SK-N-SH (cell line): ENCODE measurements at regions of chr20 and their contacts with region 1.

Region 1: GRCh38 chr20:45771182-45771759 is 20.4 kb downstream of the WFDC3 start:
- DNase-seq: peak; percentile 70
- H3K4me3 ChIP-seq: peak overlapping the region in 1 of 2 experiments; percentile 38; a peak in 1 of 4 replicates
- H3K27ac ChIP-seq: no peak overlapping the region
- H3K4me1 ChIP-seq: peaks cover 0 to 3% of the 10 kb centered on the region in 2 experiments; a peak in 2 of 4 replicates
- H3K27me3 ChIP-seq: no peaks in the 10 kb centered on the region
- CTCF ChIP-seq: peak; percentile 97
- EP300 ChIP-seq: no peak
- RAD21 ChIP-seq: peak; percentile 95

Region 2: GRCh38 chr20:45044084-45044573 is 727.1 kb before region 1 on chr20:
- CTCF ChIA-PET with region 1: interaction called, 11 read pairs
- POLR2A ChIA-PET with region 1: no interaction called
- DNase-seq: peak; percentile 36
- H3K4me3 ChIP-seq: no peak overlapping the region; a peak in 1 of 4 replicates
- H3K27ac ChIP-seq: peak overlapping the region in 1 of 2 experiments; percentile 63; a peak in 2 of 4 replicates
- H3K4me1 ChIP-seq: peaks cover 0 to 29% of the 10 kb centered on the region in 2 experiments; a peak in 2 of 4 replicates
- H3K27me3 ChIP-seq: no peaks in the 10 kb centered on the region
- CTCF ChIP-seq: peak; percentile 96
- EP300 ChIP-seq: no peak
- RAD21 ChIP-seq: peak; percentile 91

Region 3: DNA sequence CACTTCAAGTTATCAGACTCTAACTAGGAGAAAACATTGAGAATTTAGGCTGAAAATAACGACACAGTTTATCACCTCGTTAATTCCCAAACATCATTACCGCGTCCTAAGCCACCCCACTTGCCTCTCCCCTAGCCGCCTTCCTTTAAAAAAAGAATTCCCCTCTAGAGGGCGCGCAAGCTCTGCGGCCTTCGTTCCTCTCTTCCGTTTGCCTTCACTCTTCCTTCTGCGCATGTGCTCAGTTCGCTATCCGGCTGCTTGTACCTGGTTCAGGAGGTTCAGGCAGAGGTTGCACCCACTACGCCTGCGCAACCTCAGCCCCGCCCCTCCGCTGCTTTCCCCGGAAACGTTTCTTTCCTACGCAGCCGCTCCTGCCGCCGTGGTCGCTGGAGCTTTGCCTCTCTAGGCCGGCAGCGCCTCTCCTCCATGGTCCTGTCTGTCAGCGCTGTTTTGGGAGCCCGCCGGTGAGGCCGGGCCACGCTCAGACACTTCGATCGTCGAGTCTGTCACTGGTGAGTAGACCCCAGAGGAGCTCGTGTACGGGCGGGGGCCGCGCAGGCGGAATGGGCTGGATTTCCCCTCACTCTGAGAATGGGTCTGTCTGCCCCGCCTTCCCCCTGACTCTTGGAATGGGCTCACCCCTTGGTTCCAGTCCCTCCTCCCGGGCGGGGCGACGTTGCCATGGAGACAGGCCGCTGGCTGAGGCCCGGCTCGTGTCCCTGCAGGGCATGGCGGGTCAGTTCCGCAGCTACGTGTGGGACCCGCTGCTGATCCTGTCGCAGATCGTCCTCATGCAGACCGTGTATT is 408.3 kb before region 1 on chr20 and contains the start of gene SYS1:
- CTCF ChIA-PET with region 1: interaction called, 26 read pairs
- POLR2A ChIA-PET with region 1: no interaction called
- DNase-seq: peak; percentile 96
- H3K4me3 ChIP-seq: peak within 1 kb of the TSS; percentile 80 to 92
- H3K27ac ChIP-seq: peak within 1 kb of the TSS; percentile 91 to 97
- H3K4me1 ChIP-seq: peaks cover 0 to 11% of the 10 kb centered on the region in 2 experiments; a peak in 2 of 4 replicates
- H3K27me3 ChIP-seq: no peaks in the 10 kb centered on the region
- CTCF ChIP-seq: peak; percentile 88
- EP300 ChIP-seq: peak; percentile 13 to 15; a peak in 1 of 4 replicates
- RAD21 ChIP-seq: peak; percentile 87
- polyA plus RNA-seq, gene SYS1: 26.5 and 26.9 TPM in 2 replicates

Region 4: GRCh38 chr20:45450097-45450818 is 321.0 kb before region 1 on chr20:
- CTCF ChIA-PET with region 1: interaction called, 67 read pairs
- POLR2A ChIA-PET with region 1: no interaction called
- DNase-seq: peak; percentile 41
- H3K4me3 ChIP-seq: no peak overlapping the region
- H3K27ac ChIP-seq: no peak overlapping the region
- H3K4me1 ChIP-seq: no peaks in the 10 kb centered on the region
- H3K27me3 ChIP-seq: peaks cover 17% of the 10 kb centered on the region; the same call in 1 of the 2 replicates
- CTCF ChIP-seq: peak; percentile 71
- EP300 ChIP-seq: no peak
- RAD21 ChIP-seq: peak; percentile 63

Region 5: GRCh38 chr20:45592574-45593189 is 178.6 kb before region 1 on chr20:
- CTCF ChIA-PET with region 1: interaction called, 14 read pairs
- POLR2A ChIA-PET with region 1: no interaction called
- DNase-seq: peak; percentile 33
- H3K4me3 ChIP-seq: no peak overlapping the region; a peak in 1 of 4 replicates
- H3K27ac ChIP-seq: no peak overlapping the region
- H3K4me1 ChIP-seq: no peaks in the 10 kb centered on the region
- H3K27me3 ChIP-seq: peaks cover 10% of the 10 kb centered on the region; the same call in 1 of the 2 replicates
- CTCF ChIP-seq: peak; percentile 75
- EP300 ChIP-seq: no peak
- RAD21 ChIP-seq: peak; percentile 60

Region 6: GRCh38 chr20:45792332-45792686 is 21.0 kb after region 1 on chr20:
- CTCF ChIA-PET with region 1: interaction called, 51 read pairs
- POLR2A ChIA-PET with region 1: no interaction called
- DNase-seq: peak; percentile 20
- H3K4me3 ChIP-seq: peak overlapping the region; percentile 87 to 98
- H3K27ac ChIP-seq: peak overlapping the region; percentile 54 to 66; a peak in 2 of 4 replicates
- H3K4me1 ChIP-seq: peaks cover 0 to 9% of the 10 kb centered on the region in 2 experiments; a peak in 2 of 4 replicates
- H3K27me3 ChIP-seq: no peaks in the 10 kb centered on the region
- CTCF ChIP-seq: no peak
- EP300 ChIP-seq: no peak
- RAD21 ChIP-seq: no peak